Lower lobe of right lung (tissue), 2 donors: ENCODE measurements at regions of chr10 and their contacts with region 1.

Region 1: DNA sequence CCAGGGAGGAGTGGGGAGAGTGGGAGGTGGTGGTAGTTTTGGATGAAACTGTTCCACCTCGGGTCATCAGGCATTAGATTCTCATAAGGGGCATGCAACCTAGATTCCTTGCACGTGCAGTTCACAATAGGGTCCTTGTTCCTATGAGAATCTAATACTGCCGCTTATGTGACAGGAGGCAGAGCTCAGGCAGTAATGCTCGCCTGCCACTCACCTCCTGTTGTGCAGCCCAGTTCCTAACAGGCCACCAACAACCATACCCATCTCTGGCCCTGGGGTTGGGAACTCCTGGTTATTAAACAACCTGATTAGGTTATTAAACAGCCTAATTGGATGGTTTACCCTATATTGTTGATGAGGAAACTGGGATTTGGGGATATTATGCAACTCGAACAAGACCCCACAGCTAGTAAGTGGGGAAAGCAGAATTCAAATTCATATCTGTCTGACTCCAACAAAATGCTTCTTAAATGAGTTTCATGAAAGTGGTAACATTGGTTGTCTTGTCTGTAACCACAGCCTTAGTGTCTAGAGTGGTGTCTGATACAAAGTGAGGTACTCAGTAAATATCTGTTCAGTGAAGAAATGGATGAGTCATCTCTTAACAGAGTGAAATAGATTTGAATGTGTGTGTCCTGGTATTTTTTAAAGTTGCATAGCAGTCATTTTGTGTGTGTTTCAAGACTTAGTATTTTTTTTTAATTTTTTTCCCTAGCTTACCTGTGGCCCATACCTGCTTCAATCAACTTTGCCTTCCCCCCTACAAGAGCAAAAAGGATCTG is 101.6 kb downstream of the HECTD2 start:
- DNase-seq: no peak
- ATAC-seq: no peak
- H3K4me3 ChIP-seq: no peak overlapping the region
- H3K27ac ChIP-seq: no peak overlapping the region
- H3K4me1 ChIP-seq: no peaks in the 10 kb centered on the region
- H3K27me3 ChIP-seq: no peaks in the 10 kb centered on the region
- CTCF ChIP-seq: no peak

Region 2: GRCh38 chr10:91632671-91633550 is 121.2 kb after region 1 on chr10 and contains the start of gene PPP1R3C:
- intact Hi-C with region 1: loop called (anchors 10 kb)
- DNase-seq: peak; percentile 84
- ATAC-seq: peak; percentile 97
- H3K4me3 ChIP-seq: peak within 1 kb of the TSS; percentile 62
- H3K27ac ChIP-seq: peak within 1 kb of the TSS; percentile 58
- H3K4me1 ChIP-seq: peaks cover 18% of the 10 kb centered on the region
- H3K27me3 ChIP-seq: peaks cover 9% of the 10 kb centered on the region
- CTCF ChIP-seq: peak; percentile 38
- total RNA-seq, gene PPP1R3C: 10.8 TPM